OCI-LY7 (cell line): ENCODE measurements at regions of chr1 and their contacts with region 1.

Region 1: DNA sequence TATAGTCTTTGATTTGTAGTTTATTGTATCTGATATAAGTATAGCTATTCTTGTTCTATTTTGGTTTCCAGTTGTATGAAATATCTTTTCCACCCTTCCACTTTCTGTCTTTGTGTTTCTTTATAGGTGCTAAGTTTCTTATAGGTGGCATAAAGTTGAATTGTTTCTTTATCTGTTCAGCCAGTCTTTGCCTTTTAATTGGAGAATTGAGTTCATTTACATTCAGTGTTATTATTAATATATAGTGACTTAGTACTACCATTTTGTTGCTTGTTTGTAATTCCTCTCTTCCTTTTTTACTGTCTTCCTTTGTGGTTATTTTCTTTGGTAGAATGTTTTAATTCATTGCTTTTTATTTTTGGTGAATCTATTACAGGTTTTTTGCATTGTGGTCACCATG is 77.7 kb downstream of the MAGI3 start:
- DNase-seq: no peak
- H3K4me3 ChIP-seq: no peak overlapping the region
- H3K27ac ChIP-seq: no peak overlapping the region
- H3K4me1 ChIP-seq: no peaks in the 10 kb centered on the region
- CTCF ChIP-seq: no peak

Region 2: DNA sequence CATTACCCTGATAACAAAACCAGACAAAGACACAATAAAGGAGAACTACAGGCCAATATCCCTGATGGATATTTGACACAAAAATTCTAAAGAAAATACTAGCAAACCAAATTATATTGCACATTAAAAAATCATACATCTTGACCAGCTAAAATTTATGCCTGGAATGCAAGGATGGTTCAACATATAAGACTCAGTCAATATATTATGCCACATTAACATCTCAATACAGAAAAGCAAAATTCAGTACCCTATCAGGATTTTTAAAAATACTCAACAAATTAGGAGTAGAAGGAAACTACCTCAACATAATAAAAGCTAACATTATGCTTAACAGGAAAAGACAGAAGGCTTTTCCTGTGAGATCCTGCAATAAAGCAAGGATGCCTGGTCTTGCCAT is 99.4 kb after region 1 on chr1:
- CTCF ChIA-PET with region 1: no interaction called
- POLR2A ChIA-PET with region 1: no interaction called
- intact Hi-C with region 1: loop called (anchors 5 kb)
- DNase-seq: no peak
- H3K4me3 ChIP-seq: no peak overlapping the region
- H3K27ac ChIP-seq: no peak overlapping the region
- H3K4me1 ChIP-seq: no peaks in the 10 kb centered on the region
- CTCF ChIP-seq: no peak

Region 3: DNA sequence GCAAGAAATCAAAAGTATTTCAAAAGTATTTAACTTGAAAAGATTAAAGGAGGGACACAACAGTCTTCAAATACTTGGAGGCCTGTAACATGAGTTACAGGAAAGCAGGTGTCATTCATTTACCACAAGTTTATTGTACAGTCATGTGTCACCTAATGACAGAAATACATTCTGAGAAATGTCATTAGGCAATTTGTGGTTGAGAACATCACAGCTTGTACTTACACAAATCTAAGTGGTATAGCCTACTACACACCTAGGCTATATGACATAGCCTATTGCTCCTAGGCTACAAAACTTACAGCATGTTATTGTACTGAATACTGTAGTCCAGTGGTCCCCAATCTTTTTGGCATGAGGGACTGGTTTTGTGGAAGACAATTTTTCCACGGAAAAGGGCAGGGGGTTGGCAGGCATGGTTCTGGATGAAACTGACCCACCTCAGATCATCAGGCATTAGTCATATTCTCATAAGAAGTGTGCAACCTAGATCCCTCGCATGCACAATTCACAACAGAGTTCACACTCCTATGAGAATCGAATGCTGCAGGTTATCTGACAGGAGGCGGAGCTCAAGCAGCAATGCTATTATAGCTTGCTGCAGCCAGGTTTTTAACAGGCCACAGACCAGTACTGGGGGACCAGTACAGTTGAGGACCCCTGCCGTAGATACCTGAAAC is 316.2 kb after region 1 on chr1:
- CTCF ChIA-PET with region 1: no interaction called
- POLR2A ChIA-PET with region 1: no interaction called
- intact Hi-C with region 1: no loop called
- DNase-seq: no peak
- H3K4me3 ChIP-seq: no peak overlapping the region
- H3K27ac ChIP-seq: peak overlapping the region; percentile 32
- H3K4me1 ChIP-seq: peaks cover 33% of the 10 kb centered on the region
- CTCF ChIP-seq: no peak